HepG2 (cell line): ENCODE measurements at regions of chr20 and their contacts with region 1.

Region 1: DNA sequence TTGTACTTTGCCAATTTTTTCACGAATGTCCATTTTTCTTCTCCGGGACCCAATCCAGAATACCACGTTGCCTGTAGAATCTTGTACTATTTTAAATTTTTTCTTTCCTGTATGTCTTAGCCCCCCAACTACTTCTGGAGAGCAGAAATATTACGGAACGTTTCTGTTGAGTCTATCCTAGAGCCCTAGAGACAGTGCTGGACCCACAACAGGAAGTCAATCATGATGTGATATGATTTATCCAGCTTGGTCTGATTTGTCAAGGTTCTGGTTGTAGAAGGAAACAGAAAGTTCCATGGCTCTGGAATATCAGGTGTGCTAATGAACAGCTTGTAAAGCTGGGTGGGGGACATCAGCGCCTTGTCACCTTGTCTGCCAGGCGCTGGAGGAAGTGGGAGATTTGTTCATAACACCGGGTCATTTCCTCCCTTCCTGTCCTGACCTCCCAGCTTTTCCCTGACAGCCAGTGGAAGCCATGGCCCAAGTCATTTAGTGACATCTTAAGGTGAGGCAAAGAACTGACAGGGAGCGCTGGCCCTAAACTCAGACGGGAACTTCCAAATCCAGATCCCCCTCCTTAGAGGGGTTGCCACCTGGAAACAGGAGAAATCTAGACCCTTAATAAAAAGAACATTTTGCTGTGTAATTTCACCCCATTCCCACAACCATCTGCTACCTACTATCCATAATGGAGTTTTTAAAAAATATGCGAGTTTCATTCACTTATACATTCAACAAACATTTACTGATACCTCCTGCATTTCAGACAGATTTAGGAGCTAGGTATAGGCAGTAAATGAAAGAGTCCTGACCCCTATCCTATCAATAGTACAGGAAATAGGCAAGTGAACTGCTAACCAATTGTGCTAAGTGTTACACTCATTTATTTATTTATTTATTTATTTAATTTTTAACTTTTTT is 130.5 kb downstream of the ZFP64 start:
- DNase-seq: peak; percentile 71
- ATAC-seq: peak; percentile 96
- H3K4me3 ChIP-seq: no peak overlapping the region; a peak in 1 of 6 replicates
- H3K27ac ChIP-seq: no peak overlapping the region
- H3K4me1 ChIP-seq: peaks cover 9% of the 10 kb centered on the region; the same call in 1 of the 2 replicates
- H3K27me3 ChIP-seq: no peaks in the 10 kb centered on the region
- CTCF ChIP-seq: peak; percentile 94
- EP300 ChIP-seq: no peak
- POLR2A ChIP-seq: no peak
- RAD21 ChIP-seq: peak; percentile 82

Region 2: GRCh38 chr20:51639206-51639832 is 421.7 kb before region 1 on chr20:
- CTCF ChIA-PET with region 1: interaction called, 10 read pairs
- POLR2A ChIA-PET with region 1: no interaction called
- in situ Hi-C with region 1: no loop called
- intact Hi-C with region 1: no loop called
- DNase-seq: peak; percentile 75
- ATAC-seq: peak; percentile 93
- H3K4me3 ChIP-seq: no peak overlapping the region
- H3K27ac ChIP-seq: no peak overlapping the region
- H3K4me1 ChIP-seq: peaks cover 7% of the 10 kb centered on the region; the same call in 1 of the 2 replicates
- H3K27me3 ChIP-seq: no peaks in the 10 kb centered on the region
- CTCF ChIP-seq: peak; percentile 100
- EP300 ChIP-seq: no peak
- POLR2A ChIP-seq: no peak
- RAD21 ChIP-seq: peak; percentile 98

Region 3: GRCh38 chr20:51995551-51995951 is 65.5 kb before region 1 on chr20:
- CTCF ChIA-PET with region 1: no interaction called
- POLR2A ChIA-PET with region 1: no interaction called
- in situ Hi-C with region 1: loop called (anchors 10 kb)
- intact Hi-C with region 1: loop called (anchors 5 kb)
- DNase-seq: no peak
- ATAC-seq: peak; percentile 23; the same call in 1 of the 3 replicates
- H3K4me3 ChIP-seq: no peak overlapping the region
- H3K27ac ChIP-seq: no peak overlapping the region
- H3K4me1 ChIP-seq: peaks cover 7% of the 10 kb centered on the region; the same call in 1 of the 2 replicates
- H3K27me3 ChIP-seq: no peaks in the 10 kb centered on the region
- CTCF ChIP-seq: no peak
- EP300 ChIP-seq: no peak
- POLR2A ChIP-seq: no peak
- RAD21 ChIP-seq: no peak

Region 4: GRCh38 chr20:52001999-52002666 is 58.9 kb before region 1 on chr20:
- CTCF ChIA-PET with region 1: no interaction called
- POLR2A ChIA-PET with region 1: no interaction called
- in situ Hi-C with region 1: loop called (anchors 10 kb)
- intact Hi-C with region 1: loop called (anchors 5 kb)
- DNase-seq: peak; percentile 92
- ATAC-seq: peak; percentile 94
- H3K4me3 ChIP-seq: peak overlapping the region in 2 of 3 experiments; percentile 12 to 19; a peak in 2 of 6 replicates
- H3K27ac ChIP-seq: peak overlapping the region; percentile 60
- H3K4me1 ChIP-seq: peaks cover 34% of the 10 kb centered on the region
- H3K27me3 ChIP-seq: no peaks in the 10 kb centered on the region
- CTCF ChIP-seq: peak; percentile 39
- EP300 ChIP-seq: peak in 1 of 2 experiments; percentile 66; a peak in 1 of 4 replicates
- POLR2A ChIP-seq: no peak
- RAD21 ChIP-seq: no peak